Right ventricle myocardium inferior (tissue), 1 donor: ENCODE measurements at regions of chrX and their contacts with region 1.

Region 1: GRCh38 chrX:10326578-10326977 is 169.8 kb downstream of the CLCN4 start:
- DNase-seq: no peak
- ATAC-seq: no peak

Region 2: GRCh38 chrX:10387011-10387410 is 60.4 kb after region 1 on chrX:
- intact Hi-C with region 1: loop called (anchors 10 kb)
- DNase-seq: no peak
- ATAC-seq: no peak

Region 3: DNA sequence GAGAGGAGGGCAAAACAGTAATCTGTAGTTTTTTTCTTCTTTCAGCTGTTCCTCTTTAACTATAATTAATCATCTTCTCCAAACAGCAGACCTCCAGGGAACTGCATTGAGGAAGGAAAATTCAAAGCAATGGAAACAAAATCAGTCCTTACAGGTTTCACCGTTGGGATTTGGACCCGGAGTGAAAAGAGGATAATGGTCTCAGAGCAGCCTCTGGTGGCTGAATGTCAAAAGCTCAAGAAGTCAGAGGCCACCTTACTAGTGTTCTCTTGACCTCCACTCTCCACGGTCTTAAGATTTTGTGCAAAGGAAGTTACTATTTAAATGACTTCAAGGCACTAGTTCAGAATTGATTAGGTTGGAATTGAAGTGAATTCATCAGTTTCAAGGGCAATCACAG is 309.8 kb after region 1 on chrX:
- intact Hi-C with region 1: loop called (anchors 10 kb)
- DNase-seq: no peak
- ATAC-seq: peak; percentile 77